ENCODE measurements at regions of chr17 and their contacts with region 1.

Region 1: GRCh38 chr17:59753522-59754467 is 46.3 kb downstream of the VMP1 start:
- DNase-seq: no peak
- H3K4me3 ChIP-seq: peak overlapping the region in 1 of 2 donors; percentile 2
- H3K27ac ChIP-seq: peak overlapping the region; percentile 66
- H3K4me1 ChIP-seq: peaks cover 20% of the 10 kb centered on the region
- H3K27me3 ChIP-seq: no peaks in the 10 kb centered on the region
- CTCF ChIP-seq: peak; percentile 68 to 76 (median 69)
- POLR2A ChIP-seq: no peak

Region 2: GRCh38 chr17:59607817-59608403 is 145.9 kb before region 1 on chr17:
- intact Hi-C with region 1: no loop called
- DNase-seq: no peak
- H3K4me3 ChIP-seq: no peak overlapping the region
- H3K27ac ChIP-seq: no peak overlapping the region
- H3K4me1 ChIP-seq: no peaks in the 10 kb centered on the region
- H3K27me3 ChIP-seq: no peaks in the 10 kb centered on the region
- CTCF ChIP-seq: no peak
- POLR2A ChIP-seq: no peak

Region 3: DNA sequence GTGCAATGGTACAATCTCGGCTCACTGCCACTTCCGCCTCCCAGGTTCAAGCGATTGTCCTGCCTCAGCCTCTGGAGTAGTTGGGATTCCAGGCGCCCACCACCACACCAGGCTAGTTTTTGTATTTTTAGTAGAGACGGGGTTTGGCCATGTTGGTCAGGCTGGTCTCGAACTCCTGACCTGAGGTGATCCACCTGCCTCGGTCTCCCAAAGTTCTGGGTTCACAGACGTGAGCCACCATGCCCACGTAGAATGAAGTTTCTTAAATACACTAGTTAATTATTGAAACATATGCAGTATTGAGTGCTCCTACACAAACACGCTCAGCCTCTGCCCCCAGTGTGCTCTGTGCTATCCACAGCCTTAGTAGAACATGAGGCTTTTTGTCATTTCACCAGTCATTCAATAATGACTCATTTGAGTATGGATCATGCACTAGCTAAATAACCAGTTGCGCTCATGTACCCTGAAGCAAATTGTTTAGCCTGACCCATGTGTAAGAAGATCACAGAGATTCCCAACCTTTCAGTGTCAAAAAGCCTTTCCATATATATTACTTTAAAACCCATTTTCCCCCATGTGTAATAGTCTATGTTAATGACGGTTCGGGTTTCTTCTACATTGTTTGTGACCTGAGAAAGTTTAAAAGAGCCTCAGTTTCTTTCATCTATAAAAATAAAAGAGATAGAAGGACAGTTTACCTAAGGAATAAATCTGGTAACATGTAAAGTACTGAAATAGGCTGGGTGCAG is 89.3 kb after region 1 on chr17:
- intact Hi-C with region 1: loop called (anchors 5 kb)
- DNase-seq: no peak
- H3K4me3 ChIP-seq: no peak overlapping the region
- H3K27ac ChIP-seq: peak overlapping the region; percentile 99
- H3K4me1 ChIP-seq: peaks cover 70% of the 10 kb centered on the region
- H3K27me3 ChIP-seq: no peaks in the 10 kb centered on the region
- CTCF ChIP-seq: no peak
- POLR2A ChIP-seq: no peak

Region 4: GRCh38 chr17:59867691-59868090 is 113.9 kb after region 1 on chr17:
- intact Hi-C with region 1: loop called (anchors 5 kb)
- DNase-seq: no peak
- H3K4me3 ChIP-seq: no peak overlapping the region
- H3K27ac ChIP-seq: no peak overlapping the region
- H3K4me1 ChIP-seq: no peaks in the 10 kb centered on the region
- H3K27me3 ChIP-seq: no peaks in the 10 kb centered on the region
- CTCF ChIP-seq: no peak
- POLR2A ChIP-seq: no peak